H1 (cell line): ENCODE measurements at regions of chr16 and their contacts with region 1.

Region 1: GRCh38 chr16:55944377-55944802 is 69.2 kb upstream of the CES5A start:
- DNase-seq: peak; percentile 38 to 89
- H3K4me3 ChIP-seq: no peak overlapping the region
- H3K27ac ChIP-seq: no peak overlapping the region
- H3K4me1 ChIP-seq: 0 out of 7 replicates have a peak, but pooled peaks cover 0 to 2% (median 0%) of the 10 kb centered on the region in 4 experiments
- H3K27me3 ChIP-seq: no peaks in the 10 kb centered on the region
- CTCF ChIP-seq: peak; percentile 85 to 94 (median 91)
- EP300 ChIP-seq: no peak
- POLR2A ChIP-seq: no peak
- RAD21 ChIP-seq: peak; percentile 83 to 89

Region 2: GRCh38 chr16:55955845-55956244 is 11.5 kb after region 1 on chr16:
- CTCF ChIA-PET with region 1: interaction called, 47 read pairs
- POLR2A ChIA-PET with region 1: no interaction called
- DNase-seq: no peak
- H3K4me3 ChIP-seq: no peak overlapping the region
- H3K27ac ChIP-seq: no peak overlapping the region
- H3K4me1 ChIP-seq: no peaks in the 10 kb centered on the region
- H3K27me3 ChIP-seq: no peaks in the 10 kb centered on the region
- CTCF ChIP-seq: no peak
- EP300 ChIP-seq: no peak
- POLR2A ChIP-seq: no peak
- RAD21 ChIP-seq: no peak

Region 3: GRCh38 chr16:55964923-55965498 is 20.6 kb after region 1 on chr16:
- CTCF ChIA-PET with region 1: interaction called, 11 read pairs
- POLR2A ChIA-PET with region 1: no interaction called
- DNase-seq: no peak
- H3K4me3 ChIP-seq: no peak overlapping the region
- H3K27ac ChIP-seq: no peak overlapping the region
- H3K4me1 ChIP-seq: peaks cover 0 to 14% (median 6%) of the 10 kb centered on the region in 4 experiments; a peak in 4 of 7 replicates
- H3K27me3 ChIP-seq: no peaks in the 10 kb centered on the region
- CTCF ChIP-seq: no peak
- EP300 ChIP-seq: no peak
- POLR2A ChIP-seq: no peak
- RAD21 ChIP-seq: no peak

Region 4: DNA sequence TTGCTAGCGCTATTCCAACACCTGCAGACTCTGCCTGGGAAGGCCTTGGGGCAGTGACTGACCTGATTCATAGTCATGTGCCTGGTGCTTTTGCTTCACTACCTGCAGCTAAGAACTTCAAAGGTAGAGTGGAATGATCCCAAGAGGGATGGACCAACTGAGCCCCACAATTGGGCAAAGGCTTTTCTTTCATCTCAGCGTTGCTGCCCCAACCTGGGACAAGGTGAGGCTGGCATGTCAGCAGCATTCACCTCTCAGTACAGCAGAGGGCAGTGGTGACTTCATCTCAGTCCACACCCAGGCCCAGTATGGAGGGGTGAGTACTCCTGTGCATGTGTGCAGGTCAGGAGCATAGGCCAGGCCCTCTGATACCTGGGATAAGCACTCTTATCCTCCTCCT is 97.3 kb after region 1 on chr16:
- CTCF ChIA-PET with region 1: interaction called, 19 read pairs
- POLR2A ChIA-PET with region 1: no interaction called
- DNase-seq: peak; percentile 31 to 67
- H3K4me3 ChIP-seq: no peak overlapping the region
- H3K27ac ChIP-seq: no peak overlapping the region
- H3K4me1 ChIP-seq: no peaks in the 10 kb centered on the region
- H3K27me3 ChIP-seq: no peaks in the 10 kb centered on the region; a peak in 2 of 7 replicates
- CTCF ChIP-seq: peak; percentile 89 to 95 (median 90)
- EP300 ChIP-seq: no peak
- POLR2A ChIP-seq: no peak
- RAD21 ChIP-seq: peak; percentile 95